Activated CD4-positive, alpha-beta T cell treated with anti-CD3 and anti-CD28 coated beads for 36 hours (primary cell): ENCODE measurements at regions of chr11 and their contacts with region 1.

Region 1: DNA sequence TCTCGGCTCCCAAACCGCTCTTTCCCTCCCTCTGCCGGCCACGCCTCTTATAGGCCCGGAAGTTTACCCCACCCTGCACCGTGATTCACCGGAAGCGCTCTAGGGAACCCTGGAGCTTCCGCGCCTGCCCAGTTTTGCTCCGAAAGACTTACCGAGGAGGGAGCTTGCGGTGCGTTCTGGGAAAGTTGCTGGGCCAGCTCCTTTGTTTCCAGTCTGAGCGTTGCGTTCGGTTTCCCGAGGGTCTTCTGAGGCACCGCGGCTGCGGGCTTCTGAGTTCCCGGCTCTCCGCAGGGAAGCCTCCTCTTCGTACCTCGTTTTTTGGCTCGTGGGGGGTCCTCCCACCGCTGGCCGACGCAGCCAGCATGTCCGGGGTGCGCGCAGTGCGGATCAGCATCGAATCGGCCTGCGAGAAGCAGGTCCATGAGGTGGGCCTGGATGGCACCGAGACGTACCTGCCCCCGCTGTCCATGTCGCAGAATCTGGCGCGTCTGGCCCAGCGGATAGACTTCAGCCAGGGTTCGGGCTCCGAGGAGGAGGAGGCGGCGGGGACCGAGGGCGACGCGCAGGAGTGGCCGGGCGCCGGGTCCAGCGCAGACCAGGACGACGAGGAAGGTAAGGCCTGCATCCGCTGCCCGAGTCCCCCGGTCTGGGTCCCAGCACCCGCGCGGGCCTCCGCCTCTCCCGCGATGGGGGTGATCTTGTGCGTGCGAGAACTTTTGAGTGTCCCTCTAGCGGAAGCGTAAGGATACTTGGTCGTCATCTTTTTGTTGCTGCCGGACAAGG is at the start of gene MED17:
- DNase-seq: peak; percentile 95
- ATAC-seq: peak; percentile 97
- H3K4me3 Mint-ChIP-seq: peak within 1 kb of the TSS; percentile 89
- H3K27ac Mint-ChIP-seq: peak within 1 kb of the TSS; percentile 99
- H3K4me1 Mint-ChIP-seq: peaks cover 42% of the 10 kb centered on the region
- H3K27me3 Mint-ChIP-seq: no peaks in the 10 kb centered on the region
- total RNA-seq, gene MED17: 28.6 to 29.9 TPM

Region 2: GRCh38 chr11:93197380-93198214 is 586.7 kb before region 1 on chr11 and contains the start of gene SLC36A4:
- CTCF ChIA-PET with region 1: no interaction called
- POLR2A ChIA-PET with region 1: no interaction called
- intact Hi-C with region 1: loop called in 1 of 2 experiments (anchors 1 kb)
- DNase-seq: peak; percentile 94
- ATAC-seq: peak; percentile 92
- H3K4me3 Mint-ChIP-seq: peak within 1 kb of the TSS; percentile 94
- H3K27ac Mint-ChIP-seq: peak within 1 kb of the TSS; percentile 97
- H3K4me1 Mint-ChIP-seq: peaks cover 19% of the 10 kb centered on the region
- H3K27me3 Mint-ChIP-seq: peaks cover 1% of the 10 kb centered on the region
- total RNA-seq, gene SLC36A4: 13.9 to 16.1 TPM

Region 3: DNA sequence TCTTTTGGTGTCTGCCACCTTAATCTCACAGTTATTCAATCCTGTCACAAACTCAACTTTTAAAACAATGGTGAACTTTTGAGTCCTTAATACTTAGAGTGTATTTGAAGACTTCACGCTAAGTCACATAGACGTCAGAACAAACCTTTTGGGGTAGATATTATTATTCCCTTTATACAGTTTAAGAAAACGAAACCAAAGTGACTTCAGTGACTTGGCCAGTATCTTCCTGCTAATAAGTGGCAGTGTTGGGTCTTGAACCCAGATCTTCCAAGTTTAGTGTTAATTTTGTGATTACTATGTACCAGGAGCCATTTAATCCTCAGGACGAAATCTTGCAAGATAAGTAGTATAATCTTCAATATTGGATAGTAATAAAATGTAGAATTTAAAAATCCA is 122.2 kb before region 1 on chr11:
- CTCF ChIA-PET with region 1: no interaction called
- POLR2A ChIA-PET with region 1: interaction called, 3 read pairs
- intact Hi-C with region 1: loop called (anchors 1 to 5 kb)
- DNase-seq: no peak
- ATAC-seq: no peak
- H3K4me3 Mint-ChIP-seq: peak overlapping the region; percentile 94
- H3K27ac Mint-ChIP-seq: peak overlapping the region; percentile 95
- H3K4me1 Mint-ChIP-seq: peaks cover 44% of the 10 kb centered on the region
- H3K27me3 Mint-ChIP-seq: no peaks in the 10 kb centered on the region

Region 4: GRCh38 chr11:93741094-93741881 is 43.1 kb before region 1 on chr11 and contains the starts of genes C11orf54 and TAF1D:
- CTCF ChIA-PET with region 1: interaction called, 23 read pairs
- POLR2A ChIA-PET with region 1: interaction called, 62 read pairs
- intact Hi-C with region 1: loop called (anchors 1 kb)
- DNase-seq: peak; percentile 97
- ATAC-seq: peak; percentile 80
- H3K4me3 Mint-ChIP-seq: peak within 1 kb of the TSS; percentile 99
- H3K27ac Mint-ChIP-seq: peak within 1 kb of the TSS; percentile 98
- H3K4me1 Mint-ChIP-seq: peaks cover 38% of the 10 kb centered on the region
- H3K27me3 Mint-ChIP-seq: no peaks in the 10 kb centered on the region
- total RNA-seq, gene C11orf54: 13.8 to 15.7 TPM
- total RNA-seq, gene TAF1D: 326 to 355 TPM

Region 5: DNA sequence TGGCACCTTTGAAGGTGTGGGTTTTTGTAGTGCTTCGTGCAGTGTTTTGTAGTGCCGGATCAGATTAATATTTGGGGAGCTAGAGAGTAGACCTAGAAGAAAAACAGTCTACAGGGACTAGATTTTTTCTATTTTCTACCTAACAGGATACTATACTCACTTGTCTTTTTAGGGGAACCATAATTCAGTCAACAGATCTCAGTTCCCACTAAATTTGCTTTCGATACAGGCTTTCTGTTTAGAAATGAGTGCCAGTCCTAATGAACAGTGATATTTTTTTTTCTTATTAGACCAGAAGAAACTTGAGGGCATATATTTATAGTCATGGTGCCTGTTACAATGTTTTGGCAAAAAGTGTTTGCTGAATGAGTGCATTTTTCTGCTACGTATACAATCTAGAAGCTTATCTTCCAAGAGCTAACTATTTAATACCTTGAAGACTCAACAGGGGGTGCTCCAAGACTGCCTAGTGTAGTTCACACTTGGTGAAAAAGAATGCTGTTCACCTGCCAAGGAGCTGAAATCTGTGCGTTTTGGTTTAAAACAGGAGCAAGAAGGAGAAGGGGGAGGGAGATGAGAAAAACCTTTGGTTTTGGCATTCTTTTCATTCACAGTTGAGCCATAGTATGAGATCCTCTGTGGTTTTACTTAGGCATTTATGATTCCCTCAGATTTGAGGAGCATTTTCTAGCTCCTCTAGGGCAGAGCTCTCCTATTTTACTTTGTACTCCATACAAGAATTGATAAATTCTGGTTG is 110.9 kb after region 1 on chr11:
- CTCF ChIA-PET with region 1: no interaction called
- POLR2A ChIA-PET with region 1: no interaction called
- intact Hi-C with region 1: no loop called
- DNase-seq: peak; percentile 19
- ATAC-seq: peak; percentile 64
- H3K4me3 Mint-ChIP-seq: no peak overlapping the region
- H3K27ac Mint-ChIP-seq: no peak overlapping the region
- H3K4me1 Mint-ChIP-seq: no peaks in the 10 kb centered on the region
- H3K27me3 Mint-ChIP-seq: peaks cover 35% of the 10 kb centered on the region

Region 6: DNA sequence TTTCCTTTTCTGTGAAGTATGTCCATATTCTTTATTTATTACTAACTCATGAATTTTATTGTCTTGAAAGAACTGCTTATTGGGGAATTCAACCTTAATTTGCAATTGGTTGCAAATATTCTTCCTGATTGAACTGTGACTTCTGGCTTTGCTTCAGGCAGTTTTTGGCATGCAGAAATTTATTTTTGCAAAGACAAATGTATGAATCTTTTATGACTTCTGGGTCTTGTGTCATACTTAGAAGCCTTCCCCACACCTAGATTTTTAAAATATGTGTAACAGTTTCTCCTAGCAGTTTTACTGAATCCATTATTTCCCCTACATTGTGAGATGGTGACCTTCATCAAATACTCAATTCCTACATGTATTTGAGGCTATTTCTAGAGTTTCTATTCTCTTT is 697.0 kb after region 1 on chr11:
- CTCF ChIA-PET with region 1: no interaction called
- POLR2A ChIA-PET with region 1: no interaction called
- intact Hi-C with region 1: no loop called
- DNase-seq: no peak
- ATAC-seq: no peak
- H3K4me3 Mint-ChIP-seq: no peak overlapping the region
- H3K27ac Mint-ChIP-seq: no peak overlapping the region
- H3K4me1 Mint-ChIP-seq: peaks cover 7% of the 10 kb centered on the region
- H3K27me3 Mint-ChIP-seq: no peaks in the 10 kb centered on the region

Region 7: GRCh38 chr11:94553938-94554337 is 769.6 kb after region 1 on chr11:
- CTCF ChIA-PET with region 1: no interaction called
- POLR2A ChIA-PET with region 1: no interaction called
- intact Hi-C with region 1: no loop called
- DNase-seq: no peak
- ATAC-seq: no peak
- H3K4me3 Mint-ChIP-seq: no peak overlapping the region
- H3K27ac Mint-ChIP-seq: no peak overlapping the region
- H3K4me1 Mint-ChIP-seq: peaks cover 12% of the 10 kb centered on the region
- H3K27me3 Mint-ChIP-seq: no peaks in the 10 kb centered on the region

Region 8: GRCh38 chr11:94973099-94973968 is 1189.0 kb after region 1 on chr11 and contains the starts of genes CWC15 and KDM4D:
- CTCF ChIA-PET with region 1: no interaction called
- POLR2A ChIA-PET with region 1: no interaction called
- intact Hi-C with region 1: loop called in 1 of 2 experiments (anchors 5 kb)
- DNase-seq: peak; percentile 97
- ATAC-seq: peak; percentile 99
- H3K4me3 Mint-ChIP-seq: peak within 1 kb of the TSS; percentile 84
- H3K27ac Mint-ChIP-seq: peak within 1 kb of the TSS; percentile 94
- H3K4me1 Mint-ChIP-seq: peaks cover 27% of the 10 kb centered on the region
- H3K27me3 Mint-ChIP-seq: no peaks in the 10 kb centered on the region
- total RNA-seq, gene CWC15: 74.7 to 85.0 TPM
- total RNA-seq, gene KDM4D: 1.5 to 1.8 TPM